ENCODE measurements at regions of chr4 and their contacts with region 1.

Region 1: GRCh38 chr4:69095301-69095731 is 958 bp upstream of the UGT2B7 start:
- DNase-seq: peak; percentile 90
- H3K4me3 ChIP-seq: no peak overlapping the region
- H3K27ac ChIP-seq: peak overlapping the region; percentile 41
- H3K4me1 ChIP-seq: peaks cover 13% of the 10 kb centered on the region
- H3K27me3 ChIP-seq: no peaks in the 10 kb centered on the region
- CTCF ChIP-seq: no peak
- POLR2A ChIP-seq: no peak

Region 2: GRCh38 chr4:69054578-69055200 is 40.6 kb before region 1 on chr4:
- CTCF ChIA-PET with region 1: interaction called, 4 read pairs
- POLR2A ChIA-PET with region 1: no interaction called
- dilution Hi-C with region 1: no loop called
- intact Hi-C with region 1: loop called (anchors 1 kb)
- DNase-seq: peak; percentile 92
- H3K4me3 ChIP-seq: no peak overlapping the region
- H3K27ac ChIP-seq: peak overlapping the region; percentile 93
- H3K4me1 ChIP-seq: peaks cover 9% of the 10 kb centered on the region
- H3K27me3 ChIP-seq: no peaks in the 10 kb centered on the region
- CTCF ChIP-seq: no peak
- POLR2A ChIP-seq: no peak

Region 3: DNA sequence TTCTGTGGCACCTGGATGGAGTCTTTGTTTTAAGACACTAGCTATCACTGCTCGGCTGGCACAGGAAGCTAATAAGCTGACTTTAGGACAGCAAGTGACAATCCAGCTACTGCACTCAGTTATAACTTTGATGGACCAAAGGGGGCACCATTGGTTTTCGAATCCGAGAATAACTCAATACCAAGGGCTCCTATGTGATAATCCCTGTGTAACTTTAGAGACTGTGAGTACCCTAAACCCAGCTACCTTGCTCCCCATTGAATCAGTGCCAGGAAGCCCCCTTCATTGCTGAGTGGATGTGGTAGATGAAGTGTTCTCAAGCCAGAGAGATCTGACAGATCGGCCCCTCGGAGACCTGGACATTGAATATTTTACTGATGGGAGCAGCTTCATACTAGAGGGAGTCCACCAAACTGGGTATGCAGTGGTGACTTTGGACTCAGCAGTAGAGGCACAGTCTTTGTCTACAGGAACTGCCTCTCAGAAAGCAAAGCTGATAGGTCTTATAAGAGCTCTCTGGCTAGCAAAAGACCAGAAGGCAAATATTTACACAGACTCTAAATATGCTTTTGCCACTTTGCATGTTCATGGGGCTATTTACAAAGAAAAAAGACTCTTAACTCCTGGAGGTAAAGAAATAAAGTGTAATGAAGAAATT is 34.5 kb before region 1 on chr4:
- CTCF ChIA-PET with region 1: interaction called, 15 read pairs
- POLR2A ChIA-PET with region 1: no interaction called
- dilution Hi-C with region 1: no loop called
- intact Hi-C with region 1: no loop called
- DNase-seq: peak; percentile 38
- H3K4me3 ChIP-seq: no peak overlapping the region
- H3K27ac ChIP-seq: no peak overlapping the region
- H3K4me1 ChIP-seq: no peaks in the 10 kb centered on the region
- H3K27me3 ChIP-seq: no peaks in the 10 kb centered on the region
- CTCF ChIP-seq: peak in 1 of 2 donors; percentile 17
- POLR2A ChIP-seq: no peak

Measured in endothelial cell of umbilical vein (primary cell).